ENCODE measurements at regions of chr2 and their contacts with region 1.

Region 1: DNA sequence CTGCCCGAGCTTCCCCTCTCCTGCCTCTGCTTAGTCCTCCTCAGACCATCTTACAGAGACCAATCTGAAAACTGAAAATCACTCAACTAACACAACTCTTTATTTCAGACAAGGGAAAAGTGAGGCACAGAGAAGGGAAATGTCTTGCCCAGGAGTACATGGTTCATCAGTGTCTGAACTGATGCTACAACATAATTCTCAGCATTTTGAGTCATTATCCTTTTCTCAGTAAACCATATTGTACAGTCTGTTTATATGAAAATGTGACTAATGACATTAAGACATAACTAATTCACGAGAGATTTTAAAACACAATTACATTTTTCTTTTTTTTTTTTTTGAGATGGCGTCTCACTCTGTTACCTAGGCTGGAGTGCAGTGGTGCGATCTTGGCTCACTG is 62.7 kb downstream of the ITSN2 start:
- DNase-seq: no peak
- ATAC-seq: no peak
- H3K4me3 ChIP-seq: no peak overlapping the region
- H3K27ac ChIP-seq: no peak overlapping the region
- H3K4me1 ChIP-seq: no peaks in the 10 kb centered on the region
- H3K27me3 ChIP-seq: no peaks in the 10 kb centered on the region
- CTCF ChIP-seq: no peak
- POLR2A ChIP-seq: no peak

Region 2: DNA sequence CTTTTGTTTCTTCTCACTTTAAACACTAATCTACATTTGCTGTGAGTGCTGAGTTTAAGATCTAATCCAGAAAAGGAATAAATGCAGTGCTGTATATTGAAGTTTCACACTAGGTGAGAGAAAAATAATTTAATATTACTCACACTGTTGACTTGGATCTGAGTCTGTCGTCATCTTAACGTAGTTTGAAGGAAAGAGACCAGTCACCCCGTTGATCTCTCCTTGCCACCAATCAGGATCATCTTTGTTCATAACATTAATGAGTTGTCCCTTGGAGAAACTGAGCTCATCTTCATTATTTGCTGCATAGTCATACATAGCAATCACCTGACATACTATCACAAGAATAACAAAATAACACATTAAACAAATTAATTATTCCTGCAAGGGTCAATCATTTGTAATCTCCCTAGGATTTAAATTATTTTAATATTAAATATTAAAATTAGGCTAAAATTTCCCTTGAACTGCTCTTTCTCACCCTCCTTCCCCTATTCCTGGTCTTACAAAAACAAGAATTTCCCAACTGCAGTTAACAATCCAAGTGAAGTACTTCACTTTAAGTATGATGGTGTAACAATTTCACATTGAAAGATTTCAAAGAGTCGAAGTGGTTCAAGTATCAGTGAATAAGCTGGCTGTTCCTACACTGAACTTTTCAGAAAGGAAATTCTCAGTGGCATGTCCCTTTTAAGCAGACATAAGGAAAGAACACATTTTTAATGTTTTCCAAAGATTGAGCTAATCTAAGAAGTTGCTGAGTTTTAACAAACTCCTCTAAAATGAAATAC is 51.5 kb before region 1 on chr2:
- intact Hi-C with region 1: loop called in 2 of 10 experiments (anchors 10 kb)
- DNase-seq: no peak
- ATAC-seq: no peak
- H3K4me3 ChIP-seq: no peak overlapping the region
- H3K27ac ChIP-seq: no peak overlapping the region
- H3K4me1 ChIP-seq: no peaks in the 10 kb centered on the region
- H3K27me3 ChIP-seq: no peaks in the 10 kb centered on the region
- CTCF ChIP-seq: no peak
- POLR2A ChIP-seq: no peak